CD8-positive, alpha-beta T cell (primary cell): ENCODE measurements at regions of chr10 and their contacts with region 1.

Region 1: DNA sequence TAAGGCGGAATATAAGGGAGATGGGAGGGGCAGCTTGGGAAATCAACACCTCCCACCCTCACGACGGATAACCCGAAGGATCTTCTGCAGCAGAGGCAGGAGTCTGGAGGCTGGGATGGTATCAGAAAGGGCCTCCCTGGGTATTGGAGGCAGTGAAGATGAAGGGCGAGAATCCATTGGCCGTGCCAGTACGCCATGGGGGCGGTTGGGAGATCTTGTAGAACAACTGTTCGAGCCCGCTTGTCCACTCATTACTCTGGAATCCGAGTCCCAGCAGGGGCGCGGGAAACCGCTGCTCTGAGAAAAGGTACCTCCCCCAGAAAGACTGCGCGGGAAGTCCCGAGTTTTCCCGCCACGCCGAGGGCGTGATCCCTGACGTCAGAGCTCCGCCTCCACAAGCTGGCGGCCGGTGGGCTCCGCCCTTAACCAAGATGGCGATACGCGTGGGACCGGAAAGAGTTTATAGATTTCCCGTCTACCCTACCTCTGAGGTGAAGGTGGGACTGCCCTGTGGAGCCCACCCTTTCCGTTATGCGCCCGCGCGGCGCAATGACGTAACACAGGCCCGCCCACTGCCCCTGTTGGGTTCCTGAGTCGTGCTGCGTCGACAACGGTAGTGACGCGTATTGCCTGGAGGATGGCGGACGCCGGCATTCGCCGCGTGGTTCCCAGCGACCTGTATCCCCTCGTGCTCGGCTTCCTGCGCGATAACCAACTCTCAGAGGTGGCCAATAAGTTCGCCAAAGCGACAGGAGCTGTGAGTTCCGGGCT is at the start of gene NOLC1:
- DNase-seq: peak; percentile 99 to 100 (median 100)
- ATAC-seq: peak; percentile 93
- H3K4me3 ChIP-seq: peak within 1 kb of the TSS; percentile 80 to 92
- H3K4me3 Mint-ChIP-seq: peak within 1 kb of the TSS; percentile 89
- H3K27ac ChIP-seq: peak within 1 kb of the TSS; percentile 93 to 95
- H3K27ac Mint-ChIP-seq: peak within 1 kb of the TSS; percentile 90
- H3K4me1 ChIP-seq: peaks cover 27% of the 10 kb centered on the region
- H3K4me1 Mint-ChIP-seq: peaks cover 41% of the 10 kb centered on the region
- H3K27me3 ChIP-seq: no peaks in the 10 kb centered on the region
- H3K27me3 Mint-ChIP-seq: no peaks in the 10 kb centered on the region
- CTCF ChIP-seq: no peak
- total RNA-seq, gene NOLC1: 39.5 to 42.0 TPM

Region 2: GRCh38 chr10:102064868-102065560 is 86.9 kb before region 1 on chr10 and contains the start of gene HPS6:
- CTCF ChIA-PET with region 1: no interaction called
- POLR2A ChIA-PET with region 1: no interaction called
- intact Hi-C with region 1: loop called (anchors 2 kb)
- DNase-seq: peak; percentile 69 to 94 (median 89)
- ATAC-seq: peak; percentile 98
- H3K4me3 ChIP-seq: peak within 1 kb of the TSS; percentile 57 to 97
- H3K4me3 Mint-ChIP-seq: peak within 1 kb of the TSS; percentile 87
- H3K27ac ChIP-seq: peak within 1 kb of the TSS; percentile 66 to 85
- H3K27ac Mint-ChIP-seq: peak within 1 kb of the TSS; percentile 93
- H3K4me1 ChIP-seq: peaks cover 21% of the 10 kb centered on the region
- H3K4me1 Mint-ChIP-seq: peaks cover 28% of the 10 kb centered on the region
- H3K27me3 ChIP-seq: no peaks in the 10 kb centered on the region
- H3K27me3 Mint-ChIP-seq: no peaks in the 10 kb centered on the region
- CTCF ChIP-seq: no peak
- total RNA-seq, gene HPS6: 17.5 to 18.1 TPM

Region 3: GRCh38 chr10:102167861-102168260 is 15.9 kb after region 1 on chr10:
- CTCF ChIA-PET with region 1: interaction called, 12 read pairs
- POLR2A ChIA-PET with region 1: no interaction called
- intact Hi-C with region 1: loop called in 1 of 2 experiments (anchors 1 kb)
- DNase-seq: no peak
- ATAC-seq: no peak
- H3K4me3 ChIP-seq: no peak overlapping the region
- H3K4me3 Mint-ChIP-seq: no peak overlapping the region
- H3K27ac ChIP-seq: no peak overlapping the region
- H3K27ac Mint-ChIP-seq: no peak overlapping the region
- H3K4me1 ChIP-seq: peaks cover 4% of the 10 kb centered on the region
- H3K4me1 Mint-ChIP-seq: peaks cover 6% of the 10 kb centered on the region
- H3K27me3 ChIP-seq: peaks cover 0 to 3% of the 10 kb centered on the region in 2 experiments
- H3K27me3 Mint-ChIP-seq: no peaks in the 10 kb centered on the region
- CTCF ChIP-seq: no peak

Region 4: DNA sequence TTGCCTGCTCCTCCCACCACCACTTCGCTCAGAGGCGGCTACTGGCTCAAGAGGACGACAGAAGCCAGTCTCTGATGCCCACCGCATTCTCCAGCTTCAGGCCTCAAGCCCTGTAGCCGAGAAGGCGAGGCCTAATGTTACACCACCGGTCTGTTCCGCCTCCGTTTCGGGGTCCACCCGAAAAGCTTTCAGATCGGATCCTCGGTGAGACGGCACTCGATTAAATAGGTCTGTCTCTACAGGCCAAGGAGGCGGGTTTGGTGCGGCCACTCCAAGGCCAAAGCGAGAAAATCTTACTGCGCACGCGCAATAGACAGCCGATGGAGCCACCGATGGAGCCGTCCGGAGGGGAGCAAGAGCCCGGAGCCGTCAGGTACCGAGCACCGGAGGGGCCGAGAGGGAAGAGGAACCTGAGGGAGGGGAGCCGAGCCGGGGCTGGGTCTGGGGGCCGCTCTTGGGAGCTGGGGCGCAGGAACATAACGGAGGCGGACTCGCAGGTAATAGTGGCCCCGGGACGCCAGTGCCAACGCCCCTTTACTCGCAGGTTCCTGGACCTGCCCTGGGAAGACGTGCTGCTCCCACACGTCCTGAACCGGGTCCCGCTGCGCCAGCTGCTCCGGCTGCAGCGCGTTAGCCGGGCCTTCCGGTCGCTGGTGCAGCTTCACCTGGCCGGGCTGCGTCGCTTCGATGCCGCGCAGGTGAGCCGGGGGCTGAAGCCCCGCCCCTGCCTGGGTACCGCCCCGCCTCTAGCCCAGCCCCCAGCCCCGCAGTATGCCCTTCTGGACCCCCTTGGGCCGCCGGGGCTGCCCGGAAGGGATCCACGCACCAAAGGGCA is 269.1 kb after region 1 on chr10 and contains the start of gene FBXL15:
- CTCF ChIA-PET with region 1: no interaction called
- POLR2A ChIA-PET with region 1: no interaction called
- intact Hi-C with region 1: loop called in 1 of 2 experiments (anchors 2 kb)
- DNase-seq: peak; percentile 86 to 98 (median 95)
- ATAC-seq: peak; percentile 70
- H3K4me3 ChIP-seq: peak within 1 kb of the TSS; percentile 75 to 81
- H3K4me3 Mint-ChIP-seq: peak within 1 kb of the TSS; percentile 95
- H3K27ac ChIP-seq: peak within 1 kb of the TSS; percentile 79 to 82
- H3K27ac Mint-ChIP-seq: peak within 1 kb of the TSS; percentile 91
- H3K4me1 ChIP-seq: peaks cover 36% of the 10 kb centered on the region
- H3K4me1 Mint-ChIP-seq: peaks cover 39% of the 10 kb centered on the region
- H3K27me3 ChIP-seq: peaks cover 6 to 17% of the 10 kb centered on the region in 2 experiments
- H3K27me3 Mint-ChIP-seq: peaks cover 15% of the 10 kb centered on the region
- CTCF ChIP-seq: no peak
- total RNA-seq, gene FBXL15: 7.0 to 7.9 TPM

Region 5: GRCh38 chr10:102641880-102642735 is 490.1 kb after region 1 on chr10:
- CTCF ChIA-PET with region 1: no interaction called
- POLR2A ChIA-PET with region 1: no interaction called
- intact Hi-C with region 1: loop called in 1 of 2 experiments (anchors 1 kb)
- DNase-seq: peak; percentile 94 to 99 (median 98)
- ATAC-seq: peak; percentile 69
- H3K4me3 ChIP-seq: peak overlapping the region; percentile 67 to 81
- H3K4me3 Mint-ChIP-seq: peak overlapping the region; percentile 91
- H3K27ac ChIP-seq: peak overlapping the region; percentile 71 to 94
- H3K27ac Mint-ChIP-seq: peak overlapping the region; percentile 96
- H3K4me1 ChIP-seq: peaks cover 12% of the 10 kb centered on the region
- H3K4me1 Mint-ChIP-seq: peaks cover 26% of the 10 kb centered on the region
- H3K27me3 ChIP-seq: no peaks in the 10 kb centered on the region
- H3K27me3 Mint-ChIP-seq: no peaks in the 10 kb centered on the region
- CTCF ChIP-seq: no peak

Region 6: GRCh38 chr10:103396064-103396788 is 1244.3 kb after region 1 on chr10 and contains the starts of genes ATP5MK and PDCD11:
- CTCF ChIA-PET with region 1: no interaction called
- POLR2A ChIA-PET with region 1: no interaction called
- intact Hi-C with region 1: loop called in 1 of 2 experiments (anchors 5 kb)
- DNase-seq: peak; percentile 86 to 97 (median 94)
- ATAC-seq: peak; percentile 97
- H3K4me3 ChIP-seq: peak within 1 kb of the TSS; percentile 88 to 99
- H3K4me3 Mint-ChIP-seq: peak within 1 kb of the TSS; percentile 97
- H3K27ac ChIP-seq: peak within 1 kb of the TSS; percentile 66 to 69
- H3K27ac Mint-ChIP-seq: peak within 1 kb of the TSS; percentile 96
- H3K4me1 ChIP-seq: peaks cover 39% of the 10 kb centered on the region
- H3K4me1 Mint-ChIP-seq: peaks cover 64% of the 10 kb centered on the region
- H3K27me3 ChIP-seq: no peaks in the 10 kb centered on the region
- H3K27me3 Mint-ChIP-seq: no peaks in the 10 kb centered on the region
- CTCF ChIP-seq: no peak
- total RNA-seq, gene ATP5MK: 93.4 to 97.3 TPM
- total RNA-seq, gene PDCD11: 13.7 to 15.0 TPM